Activated CD8-positive, alpha-beta T cell treated with anti-CD3 and anti-CD28 coated beads, Interleukin-2, amount 10 ng/mL, durations not matched to agents 7 days and 5 days (primary cell): ENCODE measurements at regions of chr1 and their contacts with region 1.

Region 1: DNA sequence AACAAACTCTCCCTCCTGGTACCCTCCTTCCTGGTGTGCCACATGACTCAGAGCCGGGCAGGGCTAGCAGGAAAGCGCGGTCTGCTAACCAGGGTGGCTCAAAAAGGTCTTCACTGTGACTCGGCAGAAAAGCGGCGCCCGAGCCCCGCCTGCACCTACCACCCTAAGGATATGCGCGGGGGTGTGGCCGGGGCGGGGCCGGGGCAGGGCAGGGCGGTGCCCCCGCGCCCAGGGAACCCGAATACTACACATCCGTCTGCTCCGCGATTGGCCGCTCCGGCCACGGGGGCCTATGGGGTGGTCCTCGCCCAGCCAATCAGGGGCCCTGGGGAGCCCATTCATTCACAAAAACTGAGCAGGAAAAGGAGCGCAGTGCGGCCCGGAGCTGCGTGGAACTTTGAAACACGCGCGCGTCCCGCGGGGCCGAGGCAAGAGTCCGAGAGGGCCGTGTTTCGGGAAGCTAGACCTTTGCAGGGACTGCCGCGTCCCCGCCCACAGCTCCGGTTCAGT is 1.7 kb downstream of the LRP8 start:
- DNase-seq: peak; percentile 98
- ATAC-seq: peak; percentile 93
- H3K4me3 Mint-ChIP-seq: peak overlapping the region; percentile 97
- H3K27ac Mint-ChIP-seq: peak overlapping the region; percentile 98
- H3K4me1 Mint-ChIP-seq: peaks cover 54% of the 10 kb centered on the region
- H3K27me3 Mint-ChIP-seq: no peaks in the 10 kb centered on the region

Region 2: GRCh38 chr1:53073868-53074311 is 252.3 kb before region 1 on chr1:
- CTCF ChIA-PET with region 1: no interaction called
- POLR2A ChIA-PET with region 1: no interaction called
- DNase-seq: no peak
- ATAC-seq: no peak
- H3K4me3 Mint-ChIP-seq: no peak overlapping the region
- H3K27ac Mint-ChIP-seq: no peak overlapping the region
- H3K4me1 Mint-ChIP-seq: no peaks in the 10 kb centered on the region
- H3K27me3 Mint-ChIP-seq: no peaks in the 10 kb centered on the region

Region 3: DNA sequence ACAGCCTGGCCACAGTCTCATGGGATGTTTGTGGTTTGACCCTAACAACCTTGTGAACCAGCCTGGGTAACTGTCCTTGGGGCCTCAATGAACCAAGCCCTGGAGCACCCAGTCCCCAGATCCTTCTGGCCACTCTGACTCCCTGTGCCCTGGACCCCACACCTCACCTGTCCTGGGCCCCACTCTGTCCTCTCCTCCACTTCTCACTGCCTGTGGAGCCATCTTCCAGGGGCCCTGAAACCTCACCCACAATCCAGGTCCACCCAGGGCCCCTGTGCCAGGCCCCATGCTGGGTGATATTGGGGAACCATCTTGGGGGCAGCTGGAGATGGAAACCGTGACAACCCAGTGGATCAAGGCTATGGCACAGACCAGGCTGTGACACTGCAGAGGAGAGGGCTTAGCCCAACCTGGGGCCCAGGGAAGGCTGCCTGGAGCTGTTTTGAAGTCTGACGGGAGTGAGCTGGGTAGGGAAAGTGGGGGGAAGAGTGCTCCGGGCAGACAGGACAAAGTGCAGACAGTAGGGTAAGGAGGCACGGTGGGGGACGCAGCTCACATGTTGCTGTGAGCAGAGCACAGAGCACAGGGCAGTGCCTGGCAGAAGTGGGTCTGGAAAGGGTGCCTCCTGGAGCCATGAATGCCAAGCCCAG is 13.7 kb after region 1 on chr1:
- CTCF ChIA-PET with region 1: no interaction called
- POLR2A ChIA-PET with region 1: no interaction called
- DNase-seq: peak; percentile 14
- ATAC-seq: no peak
- H3K4me3 Mint-ChIP-seq: no peak overlapping the region
- H3K27ac Mint-ChIP-seq: no peak overlapping the region
- H3K4me1 Mint-ChIP-seq: peaks cover 11% of the 10 kb centered on the region
- H3K27me3 Mint-ChIP-seq: no peaks in the 10 kb centered on the region

Region 4: DNA sequence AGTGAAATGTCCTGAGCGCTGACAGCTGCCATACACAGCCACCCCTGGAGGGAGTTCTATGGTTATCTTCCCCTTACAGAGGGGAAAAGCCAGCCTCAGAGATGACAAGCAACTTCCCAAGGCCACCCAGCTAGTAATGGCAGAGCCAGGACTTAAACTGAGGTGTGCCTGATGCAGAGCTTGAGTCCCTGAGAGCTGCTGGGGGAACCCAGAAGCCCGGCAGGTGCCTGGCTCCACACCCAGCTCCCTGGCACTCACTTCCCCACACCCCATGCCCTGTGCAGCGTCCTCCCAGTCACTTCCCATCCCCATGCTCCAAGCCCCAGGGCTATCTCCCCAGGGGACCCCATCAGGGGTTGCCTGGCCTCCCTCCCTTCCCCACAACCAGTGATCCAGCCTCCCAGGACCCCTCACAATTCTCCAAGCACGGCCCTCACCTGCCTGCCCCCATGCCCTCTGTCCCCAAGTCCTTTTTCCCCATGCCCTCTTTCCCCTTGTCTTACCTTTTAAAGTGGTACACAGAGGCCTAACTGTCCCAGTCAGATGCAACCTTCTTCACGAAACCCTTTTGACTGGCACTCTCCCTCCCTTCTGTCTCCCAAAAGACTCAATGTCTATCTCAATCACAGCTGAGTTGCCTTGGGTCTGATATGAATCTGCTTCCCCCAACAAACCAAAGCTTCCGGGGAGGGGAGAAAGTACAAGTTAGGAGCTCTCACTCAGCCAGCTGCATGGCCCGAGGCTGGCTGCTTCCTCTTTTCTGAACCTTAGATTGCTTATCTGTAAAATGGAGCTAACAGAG is 41.6 kb after region 1 on chr1:
- CTCF ChIA-PET with region 1: interaction called, 5 read pairs
- POLR2A ChIA-PET with region 1: interaction called, 24 read pairs
- DNase-seq: peak; percentile 78
- ATAC-seq: peak; percentile 97
- H3K4me3 Mint-ChIP-seq: peak overlapping the region; percentile 78
- H3K27ac Mint-ChIP-seq: peak overlapping the region; percentile 89
- H3K4me1 Mint-ChIP-seq: peaks cover 28% of the 10 kb centered on the region
- H3K27me3 Mint-ChIP-seq: no peaks in the 10 kb centered on the region

Region 5: GRCh38 chr1:53413175-53414001 is 87.2 kb after region 1 on chr1:
- CTCF ChIA-PET with region 1: interaction called, 8 read pairs
- POLR2A ChIA-PET with region 1: interaction called, 19 read pairs
- DNase-seq: peak; percentile 76
- ATAC-seq: peak; percentile 92
- H3K4me3 Mint-ChIP-seq: peak overlapping the region; percentile 47
- H3K27ac Mint-ChIP-seq: peak overlapping the region; percentile 99
- H3K4me1 Mint-ChIP-seq: peaks cover 68% of the 10 kb centered on the region
- H3K27me3 Mint-ChIP-seq: no peaks in the 10 kb centered on the region

Region 6: GRCh38 chr1:53511933-53512806 is 186.0 kb after region 1 on chr1:
- CTCF ChIA-PET with region 1: no interaction called
- POLR2A ChIA-PET with region 1: no interaction called
- DNase-seq: no peak
- ATAC-seq: no peak
- H3K4me3 Mint-ChIP-seq: no peak overlapping the region
- H3K27ac Mint-ChIP-seq: no peak overlapping the region
- H3K4me1 Mint-ChIP-seq: no peaks in the 10 kb centered on the region
- H3K27me3 Mint-ChIP-seq: no peaks in the 10 kb centered on the region